Gastrocnemius medialis (tissue), 4 donors: ENCODE measurements at regions of chr22 and their contacts with region 1.

Region 1: DNA sequence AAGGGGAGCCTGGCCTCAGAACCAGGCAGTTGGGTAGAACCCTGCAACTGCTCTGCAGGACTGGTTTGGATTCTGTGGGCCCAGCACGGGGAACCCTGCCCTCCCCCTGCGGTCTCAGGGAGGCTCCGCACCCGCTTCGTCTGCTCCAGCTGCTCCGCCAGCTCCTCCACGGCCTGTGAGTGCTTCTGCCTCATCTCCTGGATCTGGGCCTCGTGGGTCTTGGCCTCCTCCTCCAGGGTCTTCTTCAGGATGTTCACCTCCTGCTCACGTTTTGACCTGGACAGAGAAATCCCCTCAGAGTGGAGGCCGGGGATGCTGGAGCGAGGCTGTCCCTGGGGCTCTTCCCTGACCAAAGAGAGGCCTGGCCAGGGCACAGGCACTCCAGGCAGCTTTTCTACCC is 41.9 kb downstream of the APOL1 start:
- DNase-seq: no peak
- ATAC-seq: no peak
- H3K4me3 ChIP-seq: no peak overlapping the region
- H3K27ac ChIP-seq: no peak overlapping the region
- H3K4me1 ChIP-seq: no peaks in the 10 kb centered on the region
- H3K27me3 ChIP-seq: no peaks in the 10 kb centered on the region
- CTCF ChIP-seq: no peak
- POLR2A ChIP-seq: no peak

Region 2: GRCh38 chr22:36136475-36136874 is 158.3 kb before region 1 on chr22:
- in situ Hi-C with region 1: no loop called
- intact Hi-C with region 1: no loop called
- DNase-seq: peak; percentile 29 to 55
- ATAC-seq: peak; percentile 34 to 41
- H3K4me3 ChIP-seq: no peak overlapping the region
- H3K27ac ChIP-seq: peak overlapping the region; percentile 41 to 55 (median 42)
- H3K4me1 ChIP-seq: no peaks in the 10 kb centered on the region
- H3K27me3 ChIP-seq: no peaks in the 10 kb centered on the region
- CTCF ChIP-seq: no peak
- POLR2A ChIP-seq: no peak

Region 3: GRCh38 chr22:36465165-36466021 is 170.6 kb after region 1 on chr22:
- in situ Hi-C with region 1: no loop called
- intact Hi-C with region 1: no loop called
- DNase-seq: peak; percentile 94 to 98
- ATAC-seq: peak; percentile 67 to 68
- H3K4me3 ChIP-seq: peak overlapping the region in 2 of 4 donors; percentile 0 to 4
- H3K27ac ChIP-seq: peak overlapping the region; percentile 91 to 98 (median 94)
- H3K4me1 ChIP-seq: peaks cover 78 to 80% of the 10 kb centered on the region in 2 donors
- H3K27me3 ChIP-seq: no peaks in the 10 kb centered on the region
- CTCF ChIP-seq: no peak
- POLR2A ChIP-seq: peak; percentile 53 to 67

Region 4: GRCh38 chr22:36478966-36479365 is 184.2 kb after region 1 on chr22:
- in situ Hi-C with region 1: loop called in 1 of 4 experiments (anchors 5 kb)
- intact Hi-C with region 1: no loop called
- DNase-seq: no peak
- ATAC-seq: no peak
- H3K4me3 ChIP-seq: no peak overlapping the region
- H3K27ac ChIP-seq: peak overlapping the region in 3 of 4 donors; percentile 33 to 56 (median 42)
- H3K4me1 ChIP-seq: peaks cover 20 to 28% of the 10 kb centered on the region in 2 donors
- H3K27me3 ChIP-seq: no peaks in the 10 kb centered on the region
- CTCF ChIP-seq: no peak
- POLR2A ChIP-seq: no peak